ENCODE measurements at regions of chr18 and their contacts with region 1.

Region 1: DNA sequence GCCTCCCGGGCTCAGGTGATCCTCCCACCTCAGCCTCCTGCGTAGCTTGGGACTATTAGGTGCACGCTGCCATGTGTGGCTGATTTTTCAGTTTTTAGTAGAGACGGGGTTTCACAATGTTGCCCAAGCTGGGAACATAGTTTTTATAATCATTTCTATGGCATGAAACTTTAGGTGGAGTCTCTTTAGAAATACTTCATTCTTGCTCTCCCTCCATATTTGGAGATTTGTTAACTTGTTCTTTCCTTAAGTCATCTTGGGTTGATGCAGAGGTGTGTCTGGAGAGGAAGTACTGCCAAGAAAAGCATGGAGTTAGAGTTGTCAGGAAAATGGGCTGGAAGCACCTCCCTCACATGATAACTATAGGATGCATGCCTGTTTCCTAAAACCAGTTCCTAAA is 17.4 kb downstream of the ZNF532 start:
- DNase-seq: no peak
- H3K4me3 Mint-ChIP-seq: no peak overlapping the region
- H3K27ac Mint-ChIP-seq: no peak overlapping the region
- H3K4me1 Mint-ChIP-seq: peaks cover 30% of the 10 kb centered on the region
- H3K27me3 Mint-ChIP-seq: no peaks in the 10 kb centered on the region
- CTCF ChIP-seq: no peak

Region 2: GRCh38 chr18:58928386-58928785 is 46.3 kb after region 1 on chr18:
- CTCF ChIA-PET with region 1: interaction called, 10 read pairs
- intact Hi-C with region 1: no loop called
- DNase-seq: no peak
- H3K4me3 Mint-ChIP-seq: no peak overlapping the region
- H3K27ac Mint-ChIP-seq: no peak overlapping the region
- H3K4me1 Mint-ChIP-seq: peaks cover 42% of the 10 kb centered on the region
- H3K27me3 Mint-ChIP-seq: no peaks in the 10 kb centered on the region
- CTCF ChIP-seq: no peak

Measured in Calu3 (cell line).